RWPE1 (cell line): ENCODE measurements at regions of chr11 and their contacts with region 1.

Region 1: GRCh38 chr11:118689851-118690552 is 10.6 kb upstream of the TREH start:
- DNase-seq: peak; percentile 95
- H3K27ac ChIP-seq: peak overlapping the region; percentile 99
- CTCF ChIP-seq: peak; percentile 98

Region 2: DNA sequence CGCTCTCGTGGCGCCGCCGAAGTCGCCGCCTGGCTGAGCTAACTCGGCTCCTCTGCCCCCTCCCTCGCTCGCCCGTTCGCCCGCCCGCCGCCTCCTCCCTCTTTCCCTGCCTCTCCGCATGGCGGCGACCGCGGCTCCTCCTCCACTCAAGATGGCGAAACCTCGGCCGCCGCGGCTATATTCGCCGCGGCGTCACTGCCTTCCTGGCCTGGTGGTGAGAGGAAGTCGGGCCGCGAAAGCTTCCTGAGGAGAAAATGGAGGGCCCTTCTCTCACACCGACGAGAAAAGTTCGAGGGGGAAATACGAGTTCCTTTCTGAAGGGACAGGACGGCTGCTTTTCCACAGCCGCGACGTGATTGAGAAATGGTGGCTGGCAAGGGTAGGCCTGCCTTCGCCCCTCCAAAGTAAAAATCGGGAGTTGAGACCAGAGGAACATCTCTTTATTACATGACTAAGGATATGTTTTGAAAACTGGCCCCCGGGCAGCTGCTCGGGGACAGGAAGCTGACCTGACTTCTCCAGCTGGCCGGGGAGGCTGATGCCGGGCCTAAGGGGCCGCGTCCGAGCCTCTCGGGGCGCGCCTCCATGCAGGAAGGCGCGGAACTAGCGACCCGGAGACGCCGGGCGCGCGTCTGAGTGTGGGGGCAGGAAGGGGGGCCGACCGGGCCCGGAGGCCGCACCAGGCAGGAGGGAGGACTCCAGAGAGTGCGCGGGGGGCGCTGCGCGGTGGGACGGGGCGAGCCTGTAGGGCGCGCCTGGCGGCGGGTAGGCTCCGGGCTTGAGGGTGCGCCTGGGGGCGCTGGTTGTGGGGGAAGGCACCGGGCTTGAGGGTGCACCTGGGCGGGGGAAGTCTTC is 101.3 kb after region 1 on chr11 and contains the start of gene DDX6:
- CTCF ChIA-PET with region 1: interaction called, 14 read pairs
- POLR2A ChIA-PET with region 1: interaction called, 3 read pairs
- DNase-seq: peak; percentile 88
- H3K27ac ChIP-seq: peak within 1 kb of the TSS; percentile 93
- CTCF ChIP-seq: peak; percentile 17; the same call in 1 of the 2 replicates